Gastrocnemius medialis (tissue), 4 donors: ENCODE measurements at regions of chr4 and their contacts with region 1.

Region 1: GRCh38 chr4:124030160-124030561 is 633.6 kb downstream of the SPRY1 start:
- DNase-seq: peak; percentile 35 to 58
- ATAC-seq: peak; percentile 81 to 89
- H3K4me3 ChIP-seq: no peak overlapping the region
- H3K27ac ChIP-seq: peak overlapping the region; percentile 46 to 65 (median 56)
- H3K4me1 ChIP-seq: peaks cover 14 to 18% of the 10 kb centered on the region in 2 donors
- H3K27me3 ChIP-seq: no peaks in the 10 kb centered on the region
- CTCF ChIP-seq: no peak
- POLR2A ChIP-seq: no peak

Region 2: GRCh38 chr4:123785538-123785937 is 244.6 kb before region 1 on chr4:
- in situ Hi-C with region 1: no loop called
- intact Hi-C with region 1: loop called (anchors 5 kb)
- DNase-seq: peak; percentile 64 to 81
- ATAC-seq: peak; percentile 79 to 92
- H3K4me3 ChIP-seq: no peak overlapping the region
- H3K27ac ChIP-seq: peak overlapping the region; percentile 68 to 79 (median 72)
- H3K4me1 ChIP-seq: peaks cover 18 to 31% of the 10 kb centered on the region in 2 donors
- H3K27me3 ChIP-seq: no peaks in the 10 kb centered on the region
- CTCF ChIP-seq: no peak
- POLR2A ChIP-seq: no peak